ENCODE measurements at regions of chr3 and their contacts with region 1.

Region 1: GRCh38 chr3:172622916-172623700 is 87.8 kb downstream of the NCEH1 start:
- DNase-seq: peak; percentile 62
- ATAC-seq: peak; percentile 67
- H3K4me3 Mint-ChIP-seq: no peak overlapping the region
- H3K27ac Mint-ChIP-seq: no peak overlapping the region
- H3K4me1 Mint-ChIP-seq: peaks cover 10% of the 10 kb centered on the region
- H3K27me3 Mint-ChIP-seq: no peaks in the 10 kb centered on the region

Region 2: DNA sequence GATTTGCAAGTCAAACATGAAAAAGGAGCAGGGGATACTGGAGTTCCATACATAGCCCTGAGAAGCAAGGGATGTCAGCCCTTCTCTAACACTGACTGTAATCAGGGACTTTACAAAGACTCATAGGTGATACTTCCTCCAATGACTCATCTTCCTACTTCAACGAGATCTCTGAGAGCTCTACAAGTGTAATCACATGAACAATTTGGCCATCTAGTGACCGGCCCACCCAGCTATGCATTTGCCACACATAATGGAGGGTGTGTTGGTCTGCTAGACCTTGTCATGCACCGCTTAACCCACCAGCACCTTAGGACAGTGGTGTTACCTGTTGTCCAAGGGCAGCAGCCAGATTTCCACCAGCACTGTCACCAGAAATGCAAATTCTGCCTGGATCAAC is 12.5 kb after region 1 on chr3:
- CTCF ChIA-PET with region 1: interaction called, 10 read pairs
- POLR2A ChIA-PET with region 1: no interaction called
- DNase-seq: no peak
- ATAC-seq: peak; percentile 57
- H3K4me3 Mint-ChIP-seq: no peak overlapping the region
- H3K27ac Mint-ChIP-seq: peak overlapping the region; percentile 7
- H3K4me1 Mint-ChIP-seq: peaks cover 6% of the 10 kb centered on the region
- H3K27me3 Mint-ChIP-seq: no peaks in the 10 kb centered on the region

Region 3: GRCh38 chr3:172685346-172686214 is 62.5 kb after region 1 on chr3:
- CTCF ChIA-PET with region 1: no interaction called
- POLR2A ChIA-PET with region 1: no interaction called
- DNase-seq: no peak
- ATAC-seq: no peak
- H3K4me3 Mint-ChIP-seq: no peak overlapping the region
- H3K27ac Mint-ChIP-seq: no peak overlapping the region
- H3K4me1 Mint-ChIP-seq: peaks cover 7% of the 10 kb centered on the region
- H3K27me3 Mint-ChIP-seq: no peaks in the 10 kb centered on the region